ENCODE measurements at regions of chr10 and their contacts with region 1.

Region 1: DNA sequence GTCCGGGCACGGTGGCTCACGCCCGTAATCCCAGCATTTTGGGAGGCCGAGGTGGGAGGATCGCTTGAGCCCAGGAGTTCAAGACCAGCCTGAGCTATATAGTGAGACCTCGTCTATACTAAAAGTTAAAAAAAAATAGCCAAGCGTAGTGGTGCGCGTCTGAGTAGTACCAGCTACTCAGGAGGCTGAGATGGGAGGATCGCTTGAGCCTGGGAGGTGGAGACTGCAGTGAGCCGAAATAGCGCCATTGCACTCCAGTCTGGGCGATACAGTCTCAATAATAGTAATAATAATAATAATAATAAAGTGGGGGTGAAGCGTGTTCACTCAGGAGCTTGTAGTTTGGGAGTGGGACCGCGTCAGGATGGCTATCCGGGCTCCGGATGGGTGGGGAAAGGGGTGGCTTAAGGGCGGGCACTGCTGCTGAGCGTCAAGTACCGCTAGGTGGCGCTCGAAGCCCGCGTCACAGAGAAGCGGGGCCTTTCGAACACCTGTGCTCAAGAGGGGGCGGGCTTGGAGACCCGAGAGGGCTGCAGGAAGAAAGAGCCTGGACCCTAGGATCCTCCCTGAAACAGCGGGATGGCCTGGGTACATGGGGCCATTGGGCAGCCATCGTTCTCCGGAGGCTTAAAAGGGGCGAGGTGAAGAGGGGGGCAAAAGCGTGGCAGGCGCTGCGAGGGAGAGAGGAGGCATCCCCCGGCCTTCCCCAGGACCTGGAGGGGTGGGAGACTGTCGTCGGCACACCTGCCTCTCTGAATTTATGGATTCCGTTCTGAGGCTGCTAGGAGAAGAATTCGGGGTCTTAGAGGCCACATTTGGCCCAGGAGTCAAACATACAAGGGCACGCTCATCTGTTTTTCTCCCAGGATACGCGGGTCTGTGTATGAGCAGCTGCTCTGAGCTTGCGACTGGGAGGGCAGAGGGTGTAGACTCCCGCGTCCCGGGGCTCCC is 14.5 kb downstream of the LBX1 start:
- DNase-seq: peak; percentile 79
- ATAC-seq: peak; percentile 89

Region 2: GRCh38 chr10:100637785-100638184 is 576.9 kb before region 1 on chr10:
- intact Hi-C with region 1: no loop called
- DNase-seq: no peak
- ATAC-seq: no peak

Region 3: DNA sequence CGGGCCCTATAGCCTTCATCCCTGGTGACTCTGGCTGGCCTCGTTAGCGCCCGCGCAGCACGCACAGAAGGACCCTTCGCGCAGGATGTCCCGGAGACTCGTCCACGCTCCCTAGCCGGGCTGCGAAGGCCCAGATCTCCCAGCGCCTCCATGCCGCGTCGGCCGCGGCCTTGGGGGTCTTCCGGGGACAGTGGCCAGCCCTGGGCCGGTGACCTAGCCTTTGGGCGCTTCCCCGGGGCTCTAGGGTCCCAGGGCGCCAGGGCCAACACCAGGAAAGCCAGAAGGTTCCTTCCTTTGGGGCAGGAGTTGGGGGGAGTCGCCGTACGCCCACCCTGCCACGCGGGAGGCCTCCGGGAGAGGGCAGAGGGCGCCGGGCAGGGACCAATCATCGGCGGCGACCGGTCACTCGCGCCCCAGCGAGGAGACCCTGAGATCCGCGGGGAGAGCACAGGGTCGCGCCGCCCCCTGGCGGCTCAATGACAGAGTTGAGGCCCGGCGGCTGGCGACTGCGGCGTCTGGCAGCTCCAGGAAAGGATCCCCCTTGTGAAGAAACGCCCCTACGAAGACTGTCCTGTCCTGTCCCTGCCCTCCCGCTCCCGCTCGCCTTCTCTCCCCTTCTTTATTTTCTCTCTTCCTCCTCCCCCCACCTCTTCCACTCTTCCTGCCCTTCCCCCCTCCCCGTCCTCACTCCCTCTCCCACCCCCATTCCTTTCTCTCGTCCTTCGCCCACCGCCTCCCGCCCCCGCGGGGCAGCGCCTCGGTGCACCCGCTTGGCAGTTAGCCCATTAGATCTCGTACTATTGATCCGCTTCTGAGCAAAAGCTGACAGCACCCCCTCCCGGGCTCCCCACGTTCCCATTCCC is 76.8 kb after region 1 on chr10:
- intact Hi-C with region 1: loop called (anchors 5 kb)
- DNase-seq: peak; percentile 78
- ATAC-seq: peak; percentile 85

Region 4: GRCh38 chr10:101467286-101467770 is 252.6 kb after region 1 on chr10:
- intact Hi-C with region 1: loop called (anchors 5 kb)
- DNase-seq: no peak
- ATAC-seq: peak; percentile 91

Region 5: GRCh38 chr10:101569838-101570766 is 355.4 kb after region 1 on chr10:
- intact Hi-C with region 1: loop called (anchors 5 kb)
- DNase-seq: peak; percentile 89
- ATAC-seq: peak; percentile 97